Naive thymus-derived CD4-positive, alpha-beta T cell (primary cell): ENCODE measurements at regions of chr11 and their contacts with region 1.

Region 1: GRCh38 chr11:106076919-106077608 is at the start of gene KBTBD3:
- DNase-seq: peak; percentile 90 to 99 (median 98)
- ATAC-seq: peak; percentile 93
- H3K4me3 ChIP-seq: peak within 1 kb of the TSS; percentile 85
- H3K4me3 Mint-ChIP-seq: peak within 1 kb of the TSS; percentile 95 to 100 (median 98)
- H3K27ac ChIP-seq: peak within 1 kb of the TSS; percentile 91
- H3K27ac Mint-ChIP-seq: peak within 1 kb of the TSS; percentile 91 to 99 (median 98)
- H3K4me1 ChIP-seq: peaks cover 29 to 35% of the 10 kb centered on the region in 2 donors
- H3K4me1 Mint-ChIP-seq: peaks cover 34 to 76% (median 69%) of the 10 kb centered on the region in 7 donors
- H3K27me3 ChIP-seq: no peaks in the 10 kb centered on the region
- H3K27me3 Mint-ChIP-seq: no peaks in the 10 kb centered on the region
- total RNA-seq, gene KBTBD3: 5.1 to 16.6 (median 7.3) TPM

Region 2: GRCh38 chr11:104968355-104968855 is 1108.7 kb before region 1 on chr11 and contains the start of gene CASP4:
- CTCF ChIA-PET with region 1: no interaction called
- POLR2A ChIA-PET with region 1: no interaction called
- intact Hi-C with region 1: loop called in 1 of 2 experiments (anchors 1 kb)
- DNase-seq: peak in 7 of 9 donors; percentile 18 to 57 (median 48)
- ATAC-seq: peak; percentile 82
- H3K4me3 ChIP-seq: peak within 1 kb of the TSS; percentile 67
- H3K4me3 Mint-ChIP-seq: peak within 1 kb of the TSS; percentile 90 to 99 (median 96)
- H3K27ac ChIP-seq: peak within 1 kb of the TSS; percentile 89
- H3K27ac Mint-ChIP-seq: peak within 1 kb of the TSS; percentile 94 to 100 (median 97)
- H3K4me1 ChIP-seq: peaks cover 16 to 36% of the 10 kb centered on the region in 2 donors
- H3K4me1 Mint-ChIP-seq: peaks cover 35 to 47% (median 43%) of the 10 kb centered on the region in 7 donors
- H3K27me3 ChIP-seq: no peaks in the 10 kb centered on the region
- H3K27me3 Mint-ChIP-seq: no peaks in the 10 kb centered on the region
- total RNA-seq, gene CASP4: 60.7 to 94.7 (median 76.9) TPM

Region 3: GRCh38 chr11:105937738-105938137 is 139.3 kb before region 1 on chr11:
- CTCF ChIA-PET with region 1: no interaction called
- POLR2A ChIA-PET with region 1: no interaction called
- intact Hi-C with region 1: no loop called
- DNase-seq: no peak
- ATAC-seq: no peak
- H3K4me3 ChIP-seq: no peak overlapping the region
- H3K4me3 Mint-ChIP-seq: no peak overlapping the region
- H3K27ac ChIP-seq: no peak overlapping the region
- H3K27ac Mint-ChIP-seq: no peak overlapping the region
- H3K4me1 ChIP-seq: no peaks in the 10 kb centered on the region
- H3K4me1 Mint-ChIP-seq: no peaks in the 10 kb centered on the region
- H3K27me3 ChIP-seq: no peaks in the 10 kb centered on the region
- H3K27me3 Mint-ChIP-seq: peaks cover 0 to 5% (median 0%) of the 10 kb centered on the region in 5 donors

Region 4: DNA sequence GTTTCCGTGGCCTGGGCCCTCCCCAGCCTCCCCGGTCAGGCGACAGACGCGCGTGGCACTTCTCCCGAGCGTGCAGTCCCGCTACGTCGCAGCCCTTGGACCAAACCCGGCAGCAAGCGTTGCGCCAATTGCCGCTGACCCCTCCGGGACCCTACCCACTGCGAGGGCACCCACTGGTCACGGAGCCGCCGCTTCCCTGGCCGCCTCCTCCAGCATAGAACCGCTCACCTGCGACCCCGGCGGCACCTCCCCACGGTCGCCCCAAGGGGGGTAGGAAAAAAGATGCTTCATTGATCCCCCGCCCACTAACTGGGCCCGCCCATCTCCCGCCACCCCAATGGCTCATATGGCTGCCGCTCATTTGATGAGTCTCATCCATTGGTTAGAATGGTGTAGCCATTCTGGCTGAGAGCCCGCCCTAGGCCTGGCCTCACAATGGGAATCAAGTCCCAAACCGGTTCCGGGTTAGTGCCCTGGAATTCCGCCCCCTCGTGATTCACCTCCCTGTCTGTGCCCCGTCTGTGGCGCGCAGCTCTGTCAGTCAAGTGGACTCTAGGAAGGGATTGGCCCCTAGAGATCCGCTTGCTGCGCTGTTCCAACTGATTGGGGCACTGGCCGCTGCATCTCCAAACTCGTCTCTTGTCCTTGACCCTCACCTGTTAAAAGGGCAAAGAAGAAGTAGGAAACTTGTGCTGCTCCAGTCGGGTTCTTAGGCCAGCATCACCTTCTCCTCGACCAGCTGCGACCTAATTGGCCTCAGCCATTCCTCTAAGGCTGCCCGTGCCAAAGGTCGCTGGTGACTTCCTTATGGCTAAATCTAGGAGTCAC is 54.9 kb before region 1 on chr11 and contains the start of gene MSANTD4:
- CTCF ChIA-PET with region 1: no interaction called
- POLR2A ChIA-PET with region 1: interaction called, 5 read pairs
- intact Hi-C with region 1: loop called (anchors 1 kb)
- DNase-seq: peak; percentile 89 to 97 (median 95)
- ATAC-seq: peak; percentile 98
- H3K4me3 ChIP-seq: peak within 1 kb of the TSS; percentile 82
- H3K4me3 Mint-ChIP-seq: peak within 1 kb of the TSS; percentile 91 to 99 (median 94)
- H3K27ac ChIP-seq: peak within 1 kb of the TSS; percentile 66
- H3K27ac Mint-ChIP-seq: peak within 1 kb of the TSS; percentile 82 to 96 (median 89)
- H3K4me1 ChIP-seq: peaks cover 10 to 20% of the 10 kb centered on the region in 2 donors
- H3K4me1 Mint-ChIP-seq: peaks cover 34 to 60% (median 49%) of the 10 kb centered on the region in 7 donors
- H3K27me3 ChIP-seq: no peaks in the 10 kb centered on the region
- H3K27me3 Mint-ChIP-seq: peaks cover 0 to 13% (median 6%) of the 10 kb centered on the region in 5 donors
- total RNA-seq, gene MSANTD4: 4.7 to 18.7 (median 15.3) TPM

Region 5: GRCh38 chr11:106087815-106088435 is 10.9 kb after region 1 on chr11:
- CTCF ChIA-PET with region 1: interaction called, 3 read pairs
- POLR2A ChIA-PET with region 1: no interaction called
- intact Hi-C with region 1: loop called (anchors 1 kb)
- DNase-seq: peak in 8 of 9 donors; percentile 10 to 32 (median 18)
- ATAC-seq: peak; percentile 82
- H3K4me3 ChIP-seq: no peak overlapping the region
- H3K4me3 Mint-ChIP-seq: peak overlapping the region in 6 of 10 donors; percentile 5 to 66 (median 43)
- H3K27ac ChIP-seq: no peak overlapping the region
- H3K27ac Mint-ChIP-seq: peak overlapping the region in 2 of 9 donors; percentile 20 to 26
- H3K4me1 ChIP-seq: peaks cover 9 to 10% of the 10 kb centered on the region in 2 donors
- H3K4me1 Mint-ChIP-seq: peaks cover 32 to 71% (median 58%) of the 10 kb centered on the region in 7 donors
- H3K27me3 ChIP-seq: no peaks in the 10 kb centered on the region
- H3K27me3 Mint-ChIP-seq: no peaks in the 10 kb centered on the region